Activated T-helper 1 cell treated with anti-CD3 and anti-CD28 coated beads, Interleukin-12 subunit alpha, Interleukin-12 subunit beta, Interleukin-2, Interleukin-4 antibody, amounts not matched to agents 30 ng/mL and 10 ng/mL and 1 ng/mL, durations not matched to agents 14 hours and 24 hours and 36 hours (primary cell): ENCODE measurements at regions of chr7 and their contacts with region 1.

Region 1: GRCh38 chr7:130668257-130669084 is at the start of gene COPG2:
- DNase-seq: peak; percentile 76
- H3K4me3 Mint-ChIP-seq: peak within 1 kb of the TSS; percentile 88
- H3K27ac Mint-ChIP-seq: peak within 1 kb of the TSS; percentile 41
- H3K4me1 Mint-ChIP-seq: peaks cover 22% of the 10 kb centered on the region
- H3K27me3 Mint-ChIP-seq: no peaks in the 10 kb centered on the region
- total RNA-seq, gene COPG2: 19.3 and 20.9 TPM in 2 replicates

Region 2: GRCh38 chr7:129502376-129502776 is 1166.1 kb before region 1 on chr7 and contains the start of gene SMKR1:
- intact Hi-C with region 1: loop called (anchors 5 kb)
- DNase-seq: peak; percentile 90
- H3K4me3 Mint-ChIP-seq: peak within 1 kb of the TSS; percentile 82
- H3K27ac Mint-ChIP-seq: peak within 1 kb of the TSS; percentile 86
- H3K4me1 Mint-ChIP-seq: peaks cover 19% of the 10 kb centered on the region
- H3K27me3 Mint-ChIP-seq: peaks cover 16% of the 10 kb centered on the region
- total RNA-seq, gene SMKR1: 4.8 and 5.7 TPM in 2 replicates

Region 3: DNA sequence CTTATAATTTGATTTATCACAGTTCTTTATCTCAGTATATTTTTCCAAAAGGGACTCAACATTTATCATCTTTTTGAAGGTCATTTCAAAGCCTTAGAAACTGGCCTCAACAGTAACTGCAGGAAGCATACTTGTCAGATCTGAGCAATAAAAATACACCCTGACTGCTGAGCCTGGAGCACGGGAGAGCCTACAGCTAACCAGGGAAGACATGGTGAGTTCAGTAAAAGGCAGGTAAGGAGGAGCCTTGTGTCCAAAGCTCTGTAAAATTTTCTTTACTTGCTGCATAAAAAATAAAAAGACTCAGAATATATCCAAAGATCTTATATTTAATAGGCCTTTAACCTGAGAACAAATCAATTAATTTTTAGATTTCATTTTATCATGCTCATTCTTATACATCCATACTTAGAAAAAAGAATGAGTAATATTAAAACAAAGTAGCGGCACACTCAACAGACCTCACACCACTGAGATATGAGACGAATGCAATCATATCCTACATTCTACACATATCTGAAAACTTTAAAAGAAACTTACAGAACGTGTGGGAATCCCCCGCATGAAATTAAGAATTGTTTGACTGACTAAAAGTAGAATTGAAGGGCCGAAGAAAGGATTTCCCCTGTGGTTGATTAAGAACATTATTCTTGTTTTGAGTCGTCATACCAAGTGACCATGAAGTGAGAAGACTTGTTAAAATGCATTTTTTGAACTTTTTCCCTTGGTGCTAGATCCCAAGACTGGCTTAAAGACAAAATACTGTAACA is 362.8 kb after region 1 on chr7:
- intact Hi-C with region 1: loop called (anchors 10 kb)
- DNase-seq: no peak
- H3K4me3 Mint-ChIP-seq: peak overlapping the region; percentile 42
- H3K27ac Mint-ChIP-seq: peak overlapping the region; percentile 81
- H3K4me1 Mint-ChIP-seq: peaks cover 79% of the 10 kb centered on the region
- H3K27me3 Mint-ChIP-seq: no peaks in the 10 kb centered on the region